Ascending aorta (tissue), 2 donors: ENCODE measurements at regions of chr6 and their contacts with region 1.

Region 1: DNA sequence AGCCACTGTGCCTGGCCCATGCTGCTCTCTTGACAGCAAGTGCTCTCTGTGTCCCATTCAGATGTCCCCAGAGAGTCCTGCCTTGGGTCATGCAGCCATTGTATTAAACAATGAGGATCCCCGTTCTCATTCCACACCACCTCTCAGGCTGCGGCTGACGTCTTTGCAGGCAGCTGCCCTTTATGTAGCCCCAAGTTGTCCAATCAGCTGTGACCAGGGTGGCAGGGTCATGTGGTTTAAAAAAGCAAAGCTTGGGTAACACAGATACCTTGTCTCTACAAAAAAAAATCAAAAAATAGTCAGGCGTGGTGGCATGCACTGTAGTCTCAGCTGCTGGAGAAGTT is 13.2 kb downstream of the GCNT2 start:
- DNase-seq: no peak
- H3K4me3 ChIP-seq: no peak overlapping the region
- H3K27ac ChIP-seq: no peak overlapping the region
- H3K4me1 ChIP-seq: peaks cover 0 to 10% of the 10 kb centered on the region in 2 donors
- H3K27me3 ChIP-seq: no peaks in the 10 kb centered on the region
- CTCF ChIP-seq: no peak

Region 2: GRCh38 chr6:10369881-10370280 is 164.5 kb before region 1 on chr6:
- intact Hi-C with region 1: no loop called
- DNase-seq: no peak
- H3K4me3 ChIP-seq: no peak overlapping the region
- H3K27ac ChIP-seq: no peak overlapping the region
- H3K4me1 ChIP-seq: no peaks in the 10 kb centered on the region
- H3K27me3 ChIP-seq: no peaks in the 10 kb centered on the region
- CTCF ChIP-seq: no peak

Region 3: DNA sequence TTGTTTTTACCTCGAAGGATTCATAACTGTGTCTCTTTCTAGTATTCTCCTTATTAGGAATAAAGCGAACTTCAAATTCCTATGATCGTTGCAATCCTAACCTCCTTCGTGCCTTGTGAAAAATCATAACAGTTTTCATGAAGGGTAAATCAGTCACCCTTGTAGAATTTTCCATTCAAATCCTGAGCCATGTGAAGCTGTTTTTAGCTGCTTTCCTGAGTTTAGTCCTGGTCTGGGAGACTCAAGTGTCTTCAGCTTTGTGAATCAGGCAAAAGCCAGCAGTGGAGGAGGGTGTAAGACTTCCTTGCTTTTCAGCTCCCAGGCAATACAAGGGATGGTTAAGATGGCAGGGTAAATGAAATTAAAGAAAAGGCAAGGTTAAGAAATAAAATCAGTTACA is 11.1 kb after region 1 on chr6:
- intact Hi-C with region 1: no loop called
- DNase-seq: peak in 1 of 2 donors; percentile 72
- H3K4me3 ChIP-seq: peak overlapping the region in 1 of 2 donors; percentile 39
- H3K27ac ChIP-seq: peak overlapping the region; percentile 90 to 95
- H3K4me1 ChIP-seq: peaks cover 6 to 49% of the 10 kb centered on the region in 2 donors
- H3K27me3 ChIP-seq: no peaks in the 10 kb centered on the region
- CTCF ChIP-seq: no peak

Region 4: DNA sequence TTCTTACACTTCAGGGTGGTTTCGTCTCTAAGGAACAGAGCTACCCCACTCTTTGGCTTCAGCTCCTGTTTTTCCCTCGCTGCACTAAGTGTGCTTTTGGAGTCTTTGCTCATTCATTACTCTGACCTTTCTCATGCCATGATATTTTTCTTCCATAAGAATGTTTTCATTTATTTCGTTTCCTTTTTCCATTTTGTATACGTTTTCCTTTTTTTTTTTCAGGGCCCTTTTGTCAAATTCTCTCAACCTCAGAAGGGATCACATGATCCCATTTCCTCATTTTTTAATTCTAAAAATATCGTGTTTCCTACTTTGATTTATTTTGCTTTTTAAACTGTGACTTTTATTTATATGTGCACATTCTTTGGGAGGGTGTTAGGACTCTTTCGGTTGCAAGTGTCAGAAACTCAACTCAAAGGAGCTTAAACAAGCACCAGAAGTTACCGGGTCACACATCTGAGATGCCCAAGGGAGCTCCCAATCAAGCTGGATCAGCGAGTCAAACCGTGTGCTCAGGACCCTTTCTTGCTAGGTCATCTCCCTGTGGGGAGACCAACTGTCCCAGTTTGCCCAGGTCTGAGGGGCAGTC is 27.3 kb after region 1 on chr6:
- intact Hi-C with region 1: no loop called
- DNase-seq: no peak
- H3K4me3 ChIP-seq: no peak overlapping the region
- H3K27ac ChIP-seq: peak overlapping the region in 1 of 2 donors; percentile 61
- H3K4me1 ChIP-seq: peaks cover 3 to 15% of the 10 kb centered on the region in 2 donors
- H3K27me3 ChIP-seq: no peaks in the 10 kb centered on the region
- CTCF ChIP-seq: no peak

Region 5: GRCh38 chr6:10609995-10610688 is 75.8 kb after region 1 on chr6:
- intact Hi-C with region 1: loop called (anchors 5 kb)
- DNase-seq: no peak
- H3K4me3 ChIP-seq: no peak overlapping the region
- H3K27ac ChIP-seq: peak overlapping the region; percentile 8 to 41
- H3K4me1 ChIP-seq: peaks cover 0 to 11% of the 10 kb centered on the region in 2 donors
- H3K27me3 ChIP-seq: no peaks in the 10 kb centered on the region
- CTCF ChIP-seq: no peak

Region 6: DNA sequence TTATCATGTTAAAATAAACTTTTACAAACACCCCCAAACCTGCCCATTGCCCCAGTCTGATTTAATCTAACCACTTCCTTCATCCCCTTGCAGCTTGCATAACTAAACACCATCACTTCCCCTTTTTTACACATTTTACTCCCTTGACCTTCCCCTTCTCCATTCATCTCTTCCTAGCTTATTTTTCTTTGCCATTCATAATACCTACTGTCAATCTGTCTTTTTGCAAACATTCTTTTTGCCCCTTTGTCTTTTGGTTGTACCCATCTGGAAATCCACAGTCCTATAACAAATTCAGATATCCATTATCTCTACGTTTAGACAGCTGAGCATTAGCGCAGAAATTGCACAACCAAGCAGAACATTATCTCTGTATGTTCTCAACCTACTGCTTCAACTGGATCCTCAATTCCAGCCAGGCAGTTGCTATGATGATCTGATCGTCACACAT is 108.8 kb after region 1 on chr6:
- intact Hi-C with region 1: loop called (anchors 5 kb)
- DNase-seq: no peak
- H3K4me3 ChIP-seq: no peak overlapping the region
- H3K27ac ChIP-seq: no peak overlapping the region
- H3K4me1 ChIP-seq: peaks cover 0 to 3% of the 10 kb centered on the region in 2 donors
- H3K27me3 ChIP-seq: no peaks in the 10 kb centered on the region
- CTCF ChIP-seq: no peak